MCF 10A (cell line): ENCODE measurements at regions of chr7 and their contacts with region 1.

Region 1: GRCh38 chr7:99312316-99313203 is 13.1 kb upstream of the ARPC1A start:
- DNase-seq: peak; percentile 74
- H3K4me3 Mint-ChIP-seq: no peak overlapping the region
- H3K27ac Mint-ChIP-seq: no peak overlapping the region
- H3K4me1 Mint-ChIP-seq: peaks cover 7% of the 10 kb centered on the region
- H3K27me3 Mint-ChIP-seq: no peaks in the 10 kb centered on the region
- CTCF ChIP-seq: peak; percentile 92

Region 2: GRCh38 chr7:99024066-99024465 is 288.5 kb before region 1 on chr7:
- CTCF ChIA-PET with region 1: interaction called, 10 read pairs
- POLR2A ChIA-PET with region 1: interaction called, 4 read pairs
- intact Hi-C with region 1: no loop called
- DNase-seq: no peak
- H3K4me3 Mint-ChIP-seq: no peak overlapping the region
- H3K27ac Mint-ChIP-seq: no peak overlapping the region
- H3K4me1 Mint-ChIP-seq: no peaks in the 10 kb centered on the region
- H3K27me3 Mint-ChIP-seq: no peaks in the 10 kb centered on the region
- CTCF ChIP-seq: no peak

Region 3: GRCh38 chr7:99040104-99040958 is 272.2 kb before region 1 on chr7:
- CTCF ChIA-PET with region 1: interaction called, 138 read pairs
- POLR2A ChIA-PET with region 1: interaction called, 4 read pairs
- intact Hi-C with region 1: loop called (anchors 1 kb)
- DNase-seq: peak; percentile 90
- H3K4me3 Mint-ChIP-seq: no peak overlapping the region
- H3K27ac Mint-ChIP-seq: peak overlapping the region; percentile 27
- H3K4me1 Mint-ChIP-seq: no peaks in the 10 kb centered on the region
- H3K27me3 Mint-ChIP-seq: no peaks in the 10 kb centered on the region
- CTCF ChIP-seq: peak; percentile 68

Region 4: DNA sequence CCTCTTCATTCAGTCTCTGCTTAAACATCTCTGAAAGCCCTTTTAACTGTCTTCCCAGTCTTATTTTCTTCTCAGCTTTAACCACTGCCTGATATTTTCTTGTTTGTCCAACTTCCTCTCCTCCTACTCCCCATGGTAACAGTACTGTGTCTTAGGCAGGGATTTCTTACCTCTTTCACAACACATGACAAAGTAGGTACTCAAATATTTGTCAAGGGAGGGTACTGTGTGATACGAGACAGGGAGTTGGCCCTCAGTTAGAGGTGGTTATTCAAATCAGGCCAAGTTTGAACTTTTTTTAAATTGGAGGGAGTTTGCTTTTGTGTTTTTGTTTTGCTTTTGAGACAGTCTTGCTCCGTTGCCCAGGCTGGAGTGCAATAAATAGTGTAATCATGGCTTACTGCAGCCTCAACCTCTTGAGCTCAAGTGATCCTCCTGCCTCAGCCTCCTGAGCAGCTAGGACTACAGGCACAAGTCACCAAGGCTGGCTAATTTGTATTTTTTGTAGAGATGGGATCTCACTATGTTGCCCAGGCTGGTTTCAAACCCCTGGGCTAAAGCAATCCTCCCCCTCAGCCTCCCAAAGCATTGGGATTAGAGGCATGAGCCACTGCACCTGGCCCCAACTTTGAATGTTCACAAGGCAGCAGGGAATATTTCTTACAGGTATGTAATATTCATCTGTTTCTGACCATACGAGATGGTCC is 102.1 kb before region 1 on chr7:
- CTCF ChIA-PET with region 1: interaction called, 13 read pairs
- POLR2A ChIA-PET with region 1: no interaction called
- intact Hi-C with region 1: no loop called
- DNase-seq: peak; percentile 62
- H3K4me3 Mint-ChIP-seq: peak overlapping the region; percentile 26
- H3K27ac Mint-ChIP-seq: peak overlapping the region; percentile 98
- H3K4me1 Mint-ChIP-seq: peaks cover 19% of the 10 kb centered on the region
- H3K27me3 Mint-ChIP-seq: no peaks in the 10 kb centered on the region
- CTCF ChIP-seq: no peak

Region 5: GRCh38 chr7:99270683-99271082 is 41.9 kb before region 1 on chr7:
- CTCF ChIA-PET with region 1: interaction called, 6 read pairs
- POLR2A ChIA-PET with region 1: interaction called, 3 read pairs
- intact Hi-C with region 1: loop called (anchors 1 kb)
- DNase-seq: no peak
- H3K4me3 Mint-ChIP-seq: no peak overlapping the region
- H3K27ac Mint-ChIP-seq: no peak overlapping the region
- H3K4me1 Mint-ChIP-seq: peaks cover 27% of the 10 kb centered on the region
- H3K27me3 Mint-ChIP-seq: no peaks in the 10 kb centered on the region
- CTCF ChIP-seq: no peak

Region 6: DNA sequence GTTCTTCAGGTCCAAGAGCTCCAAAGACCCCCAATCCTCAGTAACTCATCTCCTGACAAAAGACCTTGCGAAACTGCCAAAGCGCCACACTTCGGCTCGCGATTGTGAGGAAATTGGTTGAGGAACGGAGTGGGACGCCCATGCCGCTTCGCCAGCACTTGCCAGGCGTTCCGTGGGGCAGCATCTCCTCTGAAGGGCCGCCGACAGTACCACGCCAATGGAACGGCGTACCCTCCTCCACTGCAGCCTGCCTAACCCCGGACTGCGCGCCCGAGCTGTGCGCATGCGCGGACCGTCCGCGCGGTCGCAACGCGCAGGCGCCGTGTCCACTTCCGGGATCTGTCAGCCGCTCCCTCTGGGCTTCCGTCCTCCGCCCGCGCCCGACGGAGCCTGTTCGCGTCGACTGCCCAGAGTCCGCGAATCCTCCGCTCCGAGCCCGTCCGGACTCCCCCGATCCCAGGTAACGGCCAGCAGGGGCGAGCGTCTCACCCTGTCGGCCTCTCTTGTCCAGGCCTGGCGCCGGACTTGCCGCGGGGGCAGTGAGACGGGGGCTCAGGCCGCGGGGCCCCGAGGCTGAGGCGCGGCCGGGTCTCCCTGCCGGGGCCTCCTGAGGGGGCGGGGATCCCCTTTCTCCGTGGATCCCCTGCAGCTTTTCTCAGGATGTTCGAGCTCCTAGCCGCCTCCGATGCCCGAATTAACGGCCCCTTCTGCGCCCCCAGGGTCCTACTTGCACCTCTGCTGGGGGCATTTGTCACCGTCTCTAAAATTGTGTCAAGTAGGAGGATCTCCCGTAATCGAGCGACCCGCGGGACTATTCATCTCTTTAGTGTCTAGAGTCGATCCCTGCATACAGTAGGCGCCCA is 13.2 kb after region 1 on chr7 and contains the start of gene ARPC1A:
- CTCF ChIA-PET with region 1: interaction called, 12 read pairs
- POLR2A ChIA-PET with region 1: interaction called, 22 read pairs
- intact Hi-C with region 1: no loop called
- DNase-seq: peak; percentile 93
- H3K4me3 Mint-ChIP-seq: peak within 1 kb of the TSS; percentile 82
- H3K27ac Mint-ChIP-seq: peak within 1 kb of the TSS; percentile 81
- H3K4me1 Mint-ChIP-seq: peaks cover 18% of the 10 kb centered on the region
- H3K27me3 Mint-ChIP-seq: no peaks in the 10 kb centered on the region
- CTCF ChIP-seq: no peak
- total RNA-seq, gene ARPC1A: 149 and 180 TPM in 2 replicates

Region 7: DNA sequence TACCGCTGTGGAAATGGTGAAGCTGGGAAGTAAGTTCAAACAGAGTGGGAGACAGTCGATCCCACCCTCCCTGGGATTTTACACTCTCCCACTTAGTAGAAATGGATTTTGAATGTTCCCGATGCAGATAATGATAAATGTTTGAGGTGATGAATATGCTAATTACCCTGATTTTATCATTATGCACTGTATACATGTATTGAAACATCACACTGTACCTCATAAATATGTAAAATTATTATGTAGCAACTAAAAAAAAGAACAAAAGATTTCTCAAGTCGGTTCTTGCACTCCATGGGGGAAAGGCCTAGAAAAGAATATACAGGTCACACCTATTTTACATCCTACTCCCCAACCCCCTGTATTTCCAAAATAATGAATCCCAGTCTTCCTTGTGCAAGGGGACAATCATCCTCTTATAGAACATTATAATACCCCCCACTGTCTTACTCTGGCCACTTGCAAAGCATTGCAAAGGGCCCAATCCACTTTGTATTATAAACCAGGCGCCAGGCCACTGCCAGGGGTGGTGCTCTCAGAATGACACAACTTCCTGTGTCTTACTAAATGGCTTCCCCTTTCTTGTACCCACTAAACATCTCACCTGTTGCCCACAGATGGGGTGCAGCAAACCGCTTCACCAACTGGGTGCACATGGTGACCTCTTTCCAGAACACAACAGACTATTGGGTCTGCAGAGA is 584.9 kb after region 1 on chr7:
- CTCF ChIA-PET with region 1: no interaction called
- POLR2A ChIA-PET with region 1: no interaction called
- intact Hi-C with region 1: no loop called
- DNase-seq: no peak
- H3K4me3 Mint-ChIP-seq: no peak overlapping the region
- H3K27ac Mint-ChIP-seq: no peak overlapping the region
- H3K4me1 Mint-ChIP-seq: peaks cover 2% of the 10 kb centered on the region
- H3K27me3 Mint-ChIP-seq: no peaks in the 10 kb centered on the region
- CTCF ChIP-seq: no peak